ENCODE measurements at regions of chr5 and their contacts with region 1.

Region 1: DNA sequence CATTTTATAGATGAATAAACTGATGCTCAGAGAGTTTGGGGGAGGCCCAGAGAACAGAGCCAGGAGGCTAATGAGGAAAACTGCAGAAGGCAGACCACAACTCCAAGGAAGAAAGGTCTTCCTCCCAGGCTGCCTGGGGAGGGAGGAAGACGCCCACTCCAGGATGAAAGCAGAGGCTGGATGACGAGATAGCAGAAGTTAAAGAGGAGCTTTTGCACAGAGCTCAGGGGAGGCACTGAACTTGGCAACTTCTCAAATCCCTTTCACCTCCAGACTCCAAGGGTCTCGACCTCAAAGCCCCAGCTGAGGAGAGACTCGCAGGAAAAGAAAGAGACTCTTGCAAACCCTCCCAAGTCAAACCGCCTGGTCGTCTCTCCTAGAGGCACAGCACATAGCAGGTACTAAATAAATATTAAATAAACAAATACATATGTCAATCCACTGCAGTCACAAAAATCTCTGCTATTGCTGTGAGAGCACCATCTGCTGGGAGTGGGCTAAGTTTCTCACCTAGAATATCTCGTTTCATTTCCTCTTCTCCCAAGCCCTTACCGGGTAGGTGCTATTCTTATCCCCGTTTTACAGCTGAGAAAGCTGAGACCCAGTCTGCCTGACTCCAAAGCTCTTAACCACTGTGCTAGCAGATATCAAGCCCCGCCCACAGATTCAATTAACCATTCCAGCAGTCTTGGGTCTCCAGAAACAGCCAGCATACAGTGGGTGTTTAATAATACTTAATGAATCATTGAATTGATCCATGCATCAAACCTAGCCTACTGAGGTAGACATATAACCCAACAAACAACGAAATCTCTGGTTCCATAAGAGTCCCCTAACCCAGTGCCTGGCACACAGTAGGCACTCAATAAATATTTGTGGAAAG is 97.8 kb upstream of the HAND1 start:
- DNase-seq: peak; percentile 66
- ATAC-seq: peak; percentile 97
- H3K4me3 ChIP-seq: no peak overlapping the region
- H3K27ac ChIP-seq: no peak overlapping the region
- H3K4me1 ChIP-seq: peaks cover 16% of the 10 kb centered on the region
- H3K27me3 ChIP-seq: no peaks in the 10 kb centered on the region
- CTCF ChIP-seq: peak; percentile 60 to 67 (median 64)
- EP300 ChIP-seq: no peak
- POLR2A ChIP-seq: no peak
- RAD21 ChIP-seq: peak; percentile 74

Region 2: GRCh38 chr5:154498591-154498990 is 77.2 kb before region 1 on chr5:
- CTCF ChIA-PET with region 1: interaction called, 25 read pairs
- POLR2A ChIA-PET with region 1: no interaction called
- RAD21 ChIA-PET with region 1: interaction called, 14 read pairs
- SMC1A ChIA-PET with region 1: interaction called, 19 read pairs
- in situ Hi-C with region 1: no loop called
- intact Hi-C with region 1: no loop called
- DNase-seq: no peak
- ATAC-seq: no peak
- H3K4me3 ChIP-seq: no peak overlapping the region
- H3K27ac ChIP-seq: no peak overlapping the region
- H3K4me1 ChIP-seq: peaks cover 29% of the 10 kb centered on the region
- H3K27me3 ChIP-seq: no peaks in the 10 kb centered on the region
- CTCF ChIP-seq: no peak
- EP300 ChIP-seq: no peak
- POLR2A ChIP-seq: no peak
- RAD21 ChIP-seq: no peak

Region 3: DNA sequence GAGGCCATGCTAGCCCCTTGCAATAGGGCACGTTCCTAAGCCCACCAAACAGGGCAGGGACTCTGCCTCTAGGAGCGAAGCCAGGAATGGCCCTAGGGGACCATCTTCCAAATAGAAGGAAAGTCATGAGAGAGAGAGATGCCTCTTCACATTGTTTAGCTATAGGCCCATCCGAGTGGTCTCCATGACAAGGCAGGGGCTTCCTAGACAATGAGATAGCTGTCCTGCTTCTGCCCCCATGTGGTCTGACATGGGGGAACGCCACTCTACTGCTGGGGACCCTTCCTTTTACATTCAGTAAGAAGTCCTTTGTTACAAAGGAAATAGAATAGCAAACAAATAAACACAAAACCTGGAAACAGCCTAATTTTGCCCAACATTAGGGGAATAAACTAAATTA is 419.9 kb after region 1 on chr5:
- CTCF ChIA-PET with region 1: no interaction called
- POLR2A ChIA-PET with region 1: no interaction called
- RAD21 ChIA-PET with region 1: no interaction called
- SMC1A ChIA-PET with region 1: no interaction called
- in situ Hi-C with region 1: no loop called
- intact Hi-C with region 1: no loop called
- DNase-seq: no peak
- ATAC-seq: no peak
- H3K4me3 ChIP-seq: no peak overlapping the region
- H3K27ac ChIP-seq: no peak overlapping the region
- H3K4me1 ChIP-seq: no peaks in the 10 kb centered on the region
- H3K27me3 ChIP-seq: no peaks in the 10 kb centered on the region; a peak in 1 of 4 replicates
- CTCF ChIP-seq: 0 out of 6 replicates have a peak, but pooled peaks of 1 of the 3 experiments have one; percentile 3
- EP300 ChIP-seq: no peak
- POLR2A ChIP-seq: no peak
- RAD21 ChIP-seq: no peak